ENCODE measurements at regions of chr4 and their contacts with region 1.

Region 1: GRCh38 chr4:112031712-112032328 is 113.4 kb upstream of the FAM241A start:
- DNase-seq: no peak
- ATAC-seq: no peak
- H3K4me3 Mint-ChIP-seq: no peak overlapping the region
- H3K27ac Mint-ChIP-seq: no peak overlapping the region
- H3K4me1 Mint-ChIP-seq: no peaks in the 10 kb centered on the region
- H3K27me3 Mint-ChIP-seq: peaks cover 16% of the 10 kb centered on the region
- CTCF ChIP-seq: no peak

Region 2: GRCh38 chr4:110049951-110050925 is 1981.6 kb before region 1 on chr4:
- CTCF ChIA-PET with region 1: interaction called, 6 read pairs
- POLR2A ChIA-PET with region 1: no interaction called
- intact Hi-C with region 1: loop called (anchors 10 kb)
- DNase-seq: no peak
- ATAC-seq: no peak
- H3K4me3 Mint-ChIP-seq: no peak overlapping the region
- H3K27ac Mint-ChIP-seq: no peak overlapping the region
- H3K4me1 Mint-ChIP-seq: no peaks in the 10 kb centered on the region
- H3K27me3 Mint-ChIP-seq: no peaks in the 10 kb centered on the region
- CTCF ChIP-seq: peak; percentile 29

Region 3: GRCh38 chr4:111641955-111642579 is 389.8 kb before region 1 on chr4:
- CTCF ChIA-PET with region 1: interaction called, 7 read pairs
- POLR2A ChIA-PET with region 1: no interaction called
- intact Hi-C with region 1: loop called (anchors 1 kb)
- DNase-seq: no peak
- ATAC-seq: peak; percentile 68
- H3K4me3 Mint-ChIP-seq: no peak overlapping the region
- H3K27ac Mint-ChIP-seq: no peak overlapping the region
- H3K4me1 Mint-ChIP-seq: no peaks in the 10 kb centered on the region
- H3K27me3 Mint-ChIP-seq: no peaks in the 10 kb centered on the region
- CTCF ChIP-seq: no peak

Region 4: GRCh38 chr4:111854494-111855087 is 177.2 kb before region 1 on chr4:
- CTCF ChIA-PET with region 1: no interaction called
- POLR2A ChIA-PET with region 1: no interaction called
- intact Hi-C with region 1: loop called (anchors 5 kb)
- DNase-seq: no peak
- ATAC-seq: no peak
- H3K4me3 Mint-ChIP-seq: no peak overlapping the region
- H3K27ac Mint-ChIP-seq: no peak overlapping the region
- H3K4me1 Mint-ChIP-seq: no peaks in the 10 kb centered on the region
- H3K27me3 Mint-ChIP-seq: no peaks in the 10 kb centered on the region
- CTCF ChIP-seq: no peak

Region 5: DNA sequence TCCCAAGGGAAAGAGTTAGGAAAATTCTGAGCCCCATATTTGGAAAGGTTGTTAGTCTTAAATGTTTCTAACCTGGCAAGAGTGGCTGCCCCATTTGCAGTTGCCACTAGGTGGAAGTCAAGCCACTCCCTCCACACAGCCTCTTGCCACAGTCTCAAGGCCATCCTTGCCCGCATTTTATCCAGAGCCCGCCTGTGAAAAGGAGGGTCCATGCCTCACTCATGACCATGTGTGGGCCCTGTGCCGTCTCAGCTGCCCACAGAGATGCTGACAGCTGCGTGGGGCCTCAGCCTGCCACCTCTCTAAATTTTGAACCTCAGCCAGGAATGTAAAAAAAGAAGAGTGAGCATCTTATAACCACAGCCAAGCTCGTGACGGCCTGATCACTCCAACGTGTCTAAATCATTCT is 88.0 kb before region 1 on chr4:
- CTCF ChIA-PET with region 1: interaction called, 29 read pairs
- POLR2A ChIA-PET with region 1: no interaction called
- intact Hi-C with region 1: loop called (anchors 1 kb)
- DNase-seq: no peak
- ATAC-seq: peak; percentile 57
- H3K4me3 Mint-ChIP-seq: no peak overlapping the region
- H3K27ac Mint-ChIP-seq: no peak overlapping the region
- H3K4me1 Mint-ChIP-seq: no peaks in the 10 kb centered on the region
- H3K27me3 Mint-ChIP-seq: no peaks in the 10 kb centered on the region
- CTCF ChIP-seq: no peak

Region 6: GRCh38 chr4:112099701-112100297 is 68.0 kb after region 1 on chr4:
- CTCF ChIA-PET with region 1: no interaction called
- POLR2A ChIA-PET with region 1: no interaction called
- intact Hi-C with region 1: no loop called
- DNase-seq: no peak
- ATAC-seq: peak; percentile 50
- H3K4me3 Mint-ChIP-seq: no peak overlapping the region
- H3K27ac Mint-ChIP-seq: no peak overlapping the region
- H3K4me1 Mint-ChIP-seq: no peaks in the 10 kb centered on the region
- H3K27me3 Mint-ChIP-seq: no peaks in the 10 kb centered on the region
- CTCF ChIP-seq: peak; percentile 52